Tibial artery (tissue), 4 donors: ENCODE measurements at regions of chr14 and their contacts with region 1.

Region 1: GRCh38 chr14:60622917-60623257 is 26.4 kb downstream of the SIX1 start:
- DNase-seq: no peak
- H3K4me3 ChIP-seq: no peak overlapping the region
- H3K27ac ChIP-seq: peak overlapping the region in 1 of 2 donors; percentile 15
- H3K4me1 ChIP-seq: peaks cover 0 to 29% (median 0%) of the 10 kb centered on the region in 4 donors
- H3K27me3 ChIP-seq: no peaks in the 10 kb centered on the region
- CTCF ChIP-seq: no peak

Region 2: DNA sequence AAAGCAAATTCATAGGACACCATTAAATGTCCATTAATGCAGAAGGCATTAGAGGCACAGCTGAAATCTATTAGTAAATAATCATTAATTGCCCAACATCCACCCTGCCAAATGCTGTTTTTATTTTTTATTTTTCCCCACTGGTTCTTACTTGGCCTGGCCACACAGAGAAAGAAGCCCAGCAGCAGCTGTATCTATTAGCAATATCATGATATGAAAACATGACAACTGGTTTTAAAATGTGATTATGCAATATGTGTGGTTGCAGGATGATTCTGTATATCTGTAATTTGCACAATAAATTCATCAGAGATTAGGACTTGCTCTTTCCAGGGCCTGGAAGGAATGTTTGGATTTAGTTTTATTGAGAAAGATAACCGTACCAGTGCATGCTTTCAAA is 69.1 kb before region 1 on chr14:
- intact Hi-C with region 1: no loop called
- DNase-seq: no peak
- H3K4me3 ChIP-seq: no peak overlapping the region
- H3K27ac ChIP-seq: no peak overlapping the region
- H3K4me1 ChIP-seq: no peaks in the 10 kb centered on the region
- H3K27me3 ChIP-seq: peaks cover 0 to 3% of the 10 kb centered on the region in 2 donors
- CTCF ChIP-seq: no peak

Region 3: DNA sequence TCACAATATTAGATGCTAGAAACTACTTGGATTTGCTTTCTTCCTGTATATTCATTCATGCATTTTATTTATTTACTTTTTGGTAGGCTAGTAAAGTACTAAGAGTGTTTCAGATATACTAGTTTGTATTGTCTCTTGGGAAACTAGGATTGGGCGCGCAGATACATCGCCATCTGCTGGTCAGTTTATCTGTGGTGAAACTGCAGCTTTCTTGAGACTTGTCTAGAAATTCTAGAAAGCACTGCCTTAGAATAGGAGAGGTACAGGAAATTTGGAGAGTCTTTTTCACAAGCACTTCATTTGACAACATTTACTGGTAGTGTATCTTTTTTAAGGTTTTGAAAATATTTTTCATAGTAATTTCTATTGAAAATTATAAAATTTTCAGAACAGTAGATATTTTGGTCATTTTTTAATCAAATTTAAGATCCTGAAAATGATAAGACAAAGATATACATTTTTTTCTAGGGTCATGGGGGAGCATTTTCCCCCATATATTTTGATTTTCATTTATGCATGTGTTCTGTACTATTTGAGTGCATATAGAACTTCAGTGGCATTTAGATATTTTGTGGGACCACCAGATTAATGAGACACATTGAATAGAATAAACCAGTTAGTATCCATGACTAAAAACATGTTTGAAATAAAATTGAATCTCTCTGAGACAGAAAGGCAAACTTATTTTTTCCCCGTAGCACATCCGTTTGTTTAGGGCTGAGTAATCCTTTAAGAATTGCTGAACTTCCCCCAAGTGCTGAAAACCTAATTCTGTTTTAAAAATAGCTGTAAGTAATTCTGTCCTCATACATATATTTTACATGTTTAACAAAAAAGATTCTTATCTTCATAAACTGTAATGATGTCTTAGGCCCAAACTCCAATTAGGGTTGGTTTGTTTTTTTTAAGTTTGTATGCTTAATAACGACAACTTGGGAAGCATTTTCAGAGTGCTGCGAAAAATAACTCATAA is 402.6 kb after region 1 on chr14:
- intact Hi-C with region 1: loop called (anchors 2 kb)
- DNase-seq: peak; percentile 61 to 75
- H3K4me3 ChIP-seq: no peak overlapping the region
- H3K27ac ChIP-seq: peak overlapping the region in 1 of 2 donors; percentile 32
- H3K4me1 ChIP-seq: peaks cover 0 to 8% (median 0%) of the 10 kb centered on the region in 4 donors
- H3K27me3 ChIP-seq: no peaks in the 10 kb centered on the region
- CTCF ChIP-seq: peak; percentile 82 to 88